IMR-90 (cell line): ENCODE measurements at regions of chr2 and their contacts with region 1.

Region 1: DNA sequence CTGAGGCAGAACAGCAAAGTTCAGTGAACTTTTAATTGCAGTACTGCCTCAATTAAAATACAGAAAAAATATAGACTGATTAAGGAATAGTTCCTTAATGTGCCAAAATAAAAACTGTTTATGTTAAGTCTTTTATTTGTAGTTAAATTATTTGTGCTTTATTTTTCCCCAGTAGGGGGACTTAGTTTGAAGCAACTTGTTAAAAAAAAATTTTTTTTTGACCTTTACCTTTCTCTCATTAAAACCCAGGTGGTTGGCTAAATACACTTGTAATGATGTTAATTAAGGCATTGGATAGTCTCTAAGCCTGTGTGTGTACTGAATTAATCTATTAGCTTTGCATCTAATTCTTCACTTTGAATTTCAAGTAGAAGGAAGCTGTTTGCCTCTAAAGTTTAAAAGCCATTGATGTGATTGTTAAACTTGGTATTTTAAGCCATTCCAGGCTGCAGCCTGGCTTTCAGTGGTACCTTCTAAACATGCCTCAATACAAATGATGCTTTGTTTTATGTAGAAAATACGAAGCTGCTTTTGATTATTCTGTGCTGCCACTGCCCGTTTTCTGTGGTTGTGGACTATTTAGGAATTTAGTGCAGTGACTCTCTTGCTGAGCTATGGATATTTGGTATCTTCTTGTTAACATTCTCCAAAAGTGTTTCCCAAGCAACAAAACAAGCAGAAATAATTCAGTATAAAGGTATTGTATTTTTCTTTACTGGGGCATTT is 102.9 kb downstream of the TANC1 start:
- DNase-seq: peak; percentile 59
- ATAC-seq: peak; percentile 19; the same call in 1 of the 2 replicates
- H3K4me3 ChIP-seq: no peak overlapping the region
- H3K27ac ChIP-seq: peak overlapping the region; percentile 59; the same call in 1 of the 2 replicates
- H3K4me1 ChIP-seq: peaks cover 24% of the 10 kb centered on the region
- H3K27me3 ChIP-seq: no peaks in the 10 kb centered on the region
- CTCF ChIP-seq: no peak
- POLR2A ChIP-seq: no peak
- RAD21 ChIP-seq: no peak

Region 2: GRCh38 chr2:159053161-159054031 is 18.0 kb before region 1 on chr2:
- CTCF ChIA-PET with region 1: no interaction called
- POLR2A ChIA-PET with region 1: interaction called, 3 read pairs
- dilution Hi-C with region 1: no loop called
- in situ Hi-C with region 1: no loop called
- intact Hi-C with region 1: loop called (anchors 2 kb)
- DNase-seq: peak; percentile 99
- ATAC-seq: peak; percentile 92
- H3K4me3 ChIP-seq: no peak overlapping the region
- H3K27ac ChIP-seq: peak overlapping the region; percentile 65
- H3K4me1 ChIP-seq: peaks cover 24% of the 10 kb centered on the region
- H3K27me3 ChIP-seq: no peaks in the 10 kb centered on the region
- CTCF ChIP-seq: no peak
- POLR2A ChIP-seq: 0 out of 2 replicates have a peak, but pooled peaks have one; percentile 18
- RAD21 ChIP-seq: peak; percentile 32; the same call in 1 of the 2 replicates